ENCODE measurements at regions of chr17 and their contacts with region 1.

Region 1: GRCh38 chr17:34420254-34420766 is 57.3 kb upstream of the CCL1 start:
- DNase-seq: no peak

Region 2: GRCh38 chr17:34637548-34638525 is 217.5 kb after region 1 on chr17:
- intact Hi-C with region 1: loop called in 1 of 2 experiments (anchors 5 kb)
- DNase-seq: peak; percentile 91